H1 (cell line): ENCODE measurements at regions of chr9 and their contacts with region 1.

Region 1: DNA sequence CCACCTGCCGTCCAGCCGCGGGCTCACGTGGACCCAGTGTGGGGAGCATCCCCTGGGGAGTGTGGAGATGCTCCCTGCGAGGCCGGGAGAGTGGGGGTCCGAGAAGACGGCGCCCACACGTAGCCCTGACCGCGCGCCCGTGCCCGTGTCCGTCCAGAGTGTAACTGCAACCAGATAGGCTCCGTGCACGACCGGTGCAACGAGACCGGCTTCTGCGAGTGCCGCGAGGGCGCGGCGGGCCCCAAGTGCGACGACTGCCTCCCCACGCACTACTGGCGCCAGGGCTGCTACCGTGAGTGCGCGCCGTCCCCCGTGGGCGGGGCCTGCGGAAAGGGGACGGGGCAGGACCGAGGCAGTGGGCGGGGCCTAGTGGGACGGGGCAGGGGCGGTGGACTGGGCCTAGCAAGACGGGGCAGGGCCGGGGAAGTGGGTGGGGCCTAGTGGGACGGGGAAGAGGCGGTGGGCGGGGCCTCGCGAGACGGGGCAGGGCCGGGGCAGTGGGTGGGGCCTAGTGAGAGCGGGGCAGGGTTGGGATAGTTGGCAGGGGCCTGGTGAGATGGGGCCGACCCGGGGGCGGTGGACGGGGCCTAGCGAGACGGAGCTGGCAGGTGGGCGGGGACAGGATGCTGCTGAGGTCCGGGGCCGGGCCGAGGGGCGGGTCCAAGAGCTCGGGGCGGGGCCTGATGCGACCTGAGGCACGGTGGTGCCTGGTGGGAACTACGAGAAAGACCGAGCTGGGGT is 79.1 kb downstream of the NTNG2 start:
- DNase-seq: peak; percentile 96 to 99
- H3K4me3 ChIP-seq: peak overlapping the region; percentile 55 to 78 (median 56)
- H3K27ac ChIP-seq: no peak overlapping the region
- H3K4me1 ChIP-seq: peaks cover 2 to 27% (median 17%) of the 10 kb centered on the region in 4 experiments
- H3K27me3 ChIP-seq: peaks cover 0 to 20% (median 15%) of the 10 kb centered on the region in 4 experiments; a peak in 6 of 7 replicates
- CTCF ChIP-seq: no peak
- EP300 ChIP-seq: no peak
- POLR2A ChIP-seq: peak in 1 of 2 experiments; percentile 26; a peak in 1 of 3 replicates
- RAD21 ChIP-seq: no peak

Region 2: DNA sequence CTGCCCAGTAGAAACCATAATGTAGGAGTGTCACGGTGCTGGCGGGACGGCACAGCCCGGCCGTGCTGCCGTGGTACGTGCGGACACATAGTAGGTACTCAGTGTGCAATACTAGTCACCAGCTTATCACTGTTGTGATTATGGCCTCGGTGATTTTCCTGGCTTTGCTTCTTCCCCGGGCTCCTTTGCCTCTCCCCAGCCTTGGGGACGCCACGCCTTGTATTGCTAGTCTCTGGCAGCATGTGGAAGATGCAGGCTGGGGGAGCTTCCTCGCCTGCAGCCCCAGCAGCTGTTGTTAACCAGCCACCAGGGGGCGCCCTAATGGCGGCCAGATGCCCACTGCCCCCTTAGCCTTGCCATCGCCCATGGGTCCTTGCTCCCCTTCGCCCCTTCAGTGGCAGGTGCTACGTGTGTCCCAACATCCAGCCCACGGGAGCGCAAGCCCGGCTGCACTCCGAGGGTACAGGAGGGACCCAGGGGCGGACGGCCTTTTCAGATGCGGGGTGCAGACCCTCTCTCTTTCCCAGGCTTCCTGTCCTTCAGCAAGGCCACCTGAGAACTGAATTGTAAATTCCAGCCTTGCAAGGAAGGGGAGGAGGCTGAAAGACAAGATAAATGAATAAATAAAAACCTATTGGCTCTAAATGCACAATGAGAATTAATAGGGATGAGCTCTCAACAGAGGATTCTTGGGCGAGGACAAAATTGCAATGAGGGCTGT is 71.1 kb before region 1 on chr9:
- CTCF ChIA-PET with region 1: interaction called, 370 read pairs
- POLR2A ChIA-PET with region 1: no interaction called
- DNase-seq: peak in 1 of 2 experiments; percentile 91
- H3K4me3 ChIP-seq: no peak overlapping the region
- H3K27ac ChIP-seq: no peak overlapping the region
- H3K4me1 ChIP-seq: peaks cover 0 to 3% (median under 1%) of the 10 kb centered on the region in 4 experiments; a peak in 4 of 7 replicates
- H3K27me3 ChIP-seq: peaks cover 4 to 17% (median 14%) of the 10 kb centered on the region in 4 experiments
- CTCF ChIP-seq: peak; percentile 95 to 96 (median 95)
- EP300 ChIP-seq: no peak
- POLR2A ChIP-seq: no peak
- RAD21 ChIP-seq: peak; percentile 83 to 90

Region 3: GRCh38 chr9:132182314-132183091 is 58.4 kb before region 1 on chr9:
- CTCF ChIA-PET with region 1: interaction called, 13 read pairs
- POLR2A ChIA-PET with region 1: no interaction called
- DNase-seq: no peak
- H3K4me3 ChIP-seq: no peak overlapping the region; a peak in 1 of 8 replicates
- H3K27ac ChIP-seq: no peak overlapping the region
- H3K4me1 ChIP-seq: peaks cover 8 to 41% (median 31%) of the 10 kb centered on the region in 4 experiments
- H3K27me3 ChIP-seq: peaks cover 0 to 11% (median 10%) of the 10 kb centered on the region in 4 experiments; a peak in 6 of 7 replicates
- CTCF ChIP-seq: peak in 2 of 3 experiments; percentile 32 to 53; a peak in 3 of 4 replicates
- EP300 ChIP-seq: no peak
- POLR2A ChIP-seq: no peak
- RAD21 ChIP-seq: 0 out of 4 replicates have a peak, but pooled peaks have one; percentile 16

Region 4: GRCh38 chr9:132214027-132214622 is 26.8 kb before region 1 on chr9:
- CTCF ChIA-PET with region 1: interaction called, 19 read pairs
- POLR2A ChIA-PET with region 1: no interaction called
- DNase-seq: peak in 1 of 2 experiments; percentile 74
- H3K4me3 ChIP-seq: peak overlapping the region in 1 of 4 experiments; percentile 31; a peak in 1 of 8 replicates
- H3K27ac ChIP-seq: no peak overlapping the region
- H3K4me1 ChIP-seq: peaks cover 0 to 8% (median 5%) of the 10 kb centered on the region in 4 experiments; a peak in 6 of 7 replicates
- H3K27me3 ChIP-seq: no peaks in the 10 kb centered on the region
- CTCF ChIP-seq: peak in 1 of 3 experiments; percentile 10; a peak in 1 of 4 replicates
- EP300 ChIP-seq: no peak
- POLR2A ChIP-seq: no peak
- RAD21 ChIP-seq: no peak

Region 5: DNA sequence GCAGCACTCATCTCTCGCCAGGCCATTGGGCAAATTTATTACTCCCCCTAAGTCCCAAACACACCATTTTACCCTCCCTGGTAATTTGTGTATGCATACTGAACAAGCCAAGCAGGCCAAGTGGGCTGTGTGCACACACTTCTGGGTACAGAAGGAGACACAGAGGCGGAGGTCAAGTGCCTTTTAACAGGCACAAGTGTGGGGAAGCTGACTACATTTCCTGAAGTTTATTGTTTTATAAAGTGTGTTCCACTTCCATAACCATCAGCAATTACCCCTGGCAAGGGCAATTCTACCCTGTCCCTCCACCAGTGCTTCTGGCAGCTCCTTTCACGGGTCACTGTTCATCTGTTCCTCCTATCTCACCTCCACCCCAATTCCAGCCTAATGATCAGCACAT is 19.9 kb after region 1 on chr9:
- CTCF ChIA-PET with region 1: interaction called, 13 read pairs
- POLR2A ChIA-PET with region 1: no interaction called
- DNase-seq: no peak
- H3K4me3 ChIP-seq: no peak overlapping the region
- H3K27ac ChIP-seq: no peak overlapping the region
- H3K4me1 ChIP-seq: no peaks in the 10 kb centered on the region
- H3K27me3 ChIP-seq: no peaks in the 10 kb centered on the region
- CTCF ChIP-seq: no peak
- EP300 ChIP-seq: no peak
- POLR2A ChIP-seq: no peak
- RAD21 ChIP-seq: no peak

Region 6: DNA sequence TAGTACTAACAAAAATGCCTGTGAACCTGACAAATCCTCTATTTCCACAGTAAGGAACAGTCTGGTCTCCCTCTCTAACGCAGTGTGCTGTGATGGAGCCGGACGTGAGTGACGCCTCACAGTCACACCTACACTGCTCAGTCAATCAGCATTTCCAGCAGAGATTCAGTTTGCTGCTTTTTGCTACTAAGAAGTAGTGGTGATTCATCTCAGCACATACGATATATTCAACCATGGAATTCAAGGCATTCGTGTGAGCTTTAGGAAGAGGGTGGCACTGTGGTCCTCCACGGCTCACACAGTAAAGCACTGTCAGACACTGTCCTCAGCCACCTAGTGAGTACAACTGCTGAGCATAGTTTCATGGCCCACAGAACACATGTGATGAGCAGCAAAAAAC is 42.9 kb after region 1 on chr9:
- CTCF ChIA-PET with region 1: no interaction called
- POLR2A ChIA-PET with region 1: no interaction called
- DNase-seq: no peak
- H3K4me3 ChIP-seq: no peak overlapping the region
- H3K27ac ChIP-seq: no peak overlapping the region
- H3K4me1 ChIP-seq: no peaks in the 10 kb centered on the region
- H3K27me3 ChIP-seq: no peaks in the 10 kb centered on the region
- CTCF ChIP-seq: no peak
- EP300 ChIP-seq: no peak
- POLR2A ChIP-seq: no peak
- RAD21 ChIP-seq: no peak

Region 7: GRCh38 chr9:132424857-132425686 is 184.1 kb after region 1 on chr9:
- CTCF ChIA-PET with region 1: no interaction called
- POLR2A ChIA-PET with region 1: no interaction called
- DNase-seq: no peak
- H3K4me3 ChIP-seq: peak overlapping the region in 3 of 4 experiments; percentile 21 to 46 (median 23); a peak in 4 of 8 replicates
- H3K27ac ChIP-seq: no peak overlapping the region
- H3K4me1 ChIP-seq: peaks cover 4 to 16% (median 13%) of the 10 kb centered on the region in 4 experiments; a peak in 6 of 7 replicates
- H3K27me3 ChIP-seq: peaks cover 0 to 10% (median 2%) of the 10 kb centered on the region in 4 experiments; a peak in 5 of 7 replicates
- CTCF ChIP-seq: no peak
- EP300 ChIP-seq: no peak
- POLR2A ChIP-seq: no peak
- RAD21 ChIP-seq: no peak